Sciatic nerve (tissue), 2 donors: ENCODE measurements at regions of chr18 and their contacts with region 1.

Region 1: GRCh38 chr18:23623040-23623439 is 36.7 kb upstream of the NPC1 start:
- DNase-seq: no peak
- ATAC-seq: no peak

Region 2: DNA sequence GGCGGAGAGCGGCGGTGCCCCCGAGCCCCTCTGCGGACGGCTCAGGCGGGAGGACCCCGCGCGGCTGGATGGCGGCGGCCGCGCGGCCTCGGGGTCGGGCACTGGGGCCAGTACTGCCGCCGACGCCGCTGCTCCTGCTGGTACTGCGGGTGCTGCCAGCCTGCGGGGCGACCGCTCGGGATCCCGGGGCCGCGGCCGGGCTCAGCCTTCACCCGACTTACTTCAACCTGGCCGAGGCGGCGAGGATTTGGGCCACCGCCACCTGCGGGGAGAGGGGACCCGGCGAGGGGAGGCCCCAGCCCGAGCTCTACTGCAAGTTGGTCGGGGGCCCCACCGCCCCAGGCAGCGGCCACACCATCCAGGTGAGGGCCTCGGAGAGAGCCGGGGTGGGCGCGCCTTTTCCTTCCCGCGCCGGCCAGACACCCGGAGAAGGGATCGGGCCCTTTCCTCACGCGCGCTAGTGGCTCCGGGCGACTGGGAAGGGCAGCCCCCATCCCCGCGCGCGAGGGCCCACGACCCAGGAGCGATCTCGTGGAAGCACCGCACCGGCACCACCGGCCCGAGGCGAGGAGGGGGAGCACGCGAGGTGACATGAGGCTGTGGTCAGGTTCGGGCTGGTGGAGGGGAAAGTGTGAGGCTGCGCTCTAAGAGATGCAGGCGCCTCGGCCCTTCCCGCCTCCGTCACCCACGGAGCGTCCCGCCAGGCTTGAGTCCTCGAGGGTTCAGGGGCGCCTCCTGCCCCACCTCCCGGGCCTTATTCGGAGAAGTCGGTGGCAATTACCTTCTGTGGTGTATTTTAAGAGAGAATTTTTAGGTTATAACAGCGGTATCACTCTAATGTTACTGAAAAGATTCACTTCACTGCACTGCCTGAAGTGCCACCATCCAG is 66.8 kb after region 1 on chr18:
- intact Hi-C with region 1: no loop called
- DNase-seq: peak; percentile 62
- ATAC-seq: peak; percentile 45

Region 3: GRCh38 chr18:23812546-23813440 is 189.8 kb after region 1 on chr18:
- intact Hi-C with region 1: loop called (anchors 5 kb)
- DNase-seq: no peak
- ATAC-seq: peak; percentile 35